ENCODE measurements at regions of chr7 and their contacts with region 1.

Region 1: GRCh38 chr7:67302113-67303039 is 305.7 kb downstream of the TYW1 start:
- DNase-seq: peak; percentile 97
- H3K4me3 Mint-ChIP-seq: peak overlapping the region; percentile 88
- H3K27ac Mint-ChIP-seq: peak overlapping the region; percentile 91
- H3K4me1 Mint-ChIP-seq: peaks cover 21% of the 10 kb centered on the region
- H3K27me3 Mint-ChIP-seq: peaks cover 4% of the 10 kb centered on the region

Region 2: DNA sequence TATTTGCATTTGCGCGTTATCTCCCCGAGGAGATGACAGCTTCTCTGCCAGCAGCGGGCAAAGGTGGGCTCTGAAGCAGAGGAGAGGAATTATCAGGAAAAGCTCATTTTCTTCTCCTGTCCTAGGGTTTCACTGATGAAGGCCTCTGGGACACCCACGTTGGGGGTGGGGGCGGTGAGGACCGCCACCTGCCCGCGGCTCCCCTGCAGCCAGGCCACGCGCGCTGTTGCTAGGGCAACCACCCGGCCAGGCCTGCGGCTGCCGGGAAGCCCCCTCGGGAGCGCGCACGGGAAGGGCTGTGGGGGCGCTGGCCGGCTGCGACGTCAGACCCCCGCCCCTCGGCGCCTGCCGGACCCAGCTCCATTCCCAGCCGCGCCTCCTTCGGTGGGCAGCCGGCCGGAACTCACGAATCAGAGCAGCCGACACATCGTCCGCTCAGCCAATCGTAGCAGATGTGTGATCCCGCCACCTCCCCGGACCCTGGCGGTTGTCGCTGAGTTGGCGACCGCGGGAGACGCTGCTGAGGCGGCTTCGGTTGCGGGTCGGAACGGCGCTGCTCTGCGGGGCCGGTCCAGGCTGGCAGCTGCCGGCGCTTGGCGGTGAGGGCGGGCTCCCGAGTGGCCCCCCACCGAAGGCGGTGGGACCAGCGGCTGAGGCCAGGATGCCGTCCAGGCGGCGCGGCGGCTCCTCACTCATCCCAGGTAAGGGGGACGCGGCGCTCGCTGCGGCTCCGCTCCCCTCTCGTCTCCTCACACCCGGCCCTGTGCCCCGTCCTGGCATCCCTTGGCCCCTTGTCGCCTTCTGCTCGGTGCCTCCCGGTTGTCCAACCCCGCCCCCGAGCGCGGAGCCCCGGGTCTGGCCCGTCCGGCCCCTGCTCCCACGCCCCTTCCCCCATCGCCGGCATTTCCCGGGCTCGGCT is 1097.3 kb before region 1 on chr7 and contains the start of gene TPST1:
- intact Hi-C with region 1: loop called (anchors 10 kb)
- DNase-seq: peak; percentile 77
- H3K4me3 Mint-ChIP-seq: peak within 1 kb of the TSS; percentile 92
- H3K27ac Mint-ChIP-seq: peak within 1 kb of the TSS; percentile 49
- H3K4me1 Mint-ChIP-seq: peaks cover 29% of the 10 kb centered on the region
- H3K27me3 Mint-ChIP-seq: peaks cover 36% of the 10 kb centered on the region
- total RNA-seq, gene TPST1: 1.6 and 1.8 TPM in 2 replicates

Region 3: DNA sequence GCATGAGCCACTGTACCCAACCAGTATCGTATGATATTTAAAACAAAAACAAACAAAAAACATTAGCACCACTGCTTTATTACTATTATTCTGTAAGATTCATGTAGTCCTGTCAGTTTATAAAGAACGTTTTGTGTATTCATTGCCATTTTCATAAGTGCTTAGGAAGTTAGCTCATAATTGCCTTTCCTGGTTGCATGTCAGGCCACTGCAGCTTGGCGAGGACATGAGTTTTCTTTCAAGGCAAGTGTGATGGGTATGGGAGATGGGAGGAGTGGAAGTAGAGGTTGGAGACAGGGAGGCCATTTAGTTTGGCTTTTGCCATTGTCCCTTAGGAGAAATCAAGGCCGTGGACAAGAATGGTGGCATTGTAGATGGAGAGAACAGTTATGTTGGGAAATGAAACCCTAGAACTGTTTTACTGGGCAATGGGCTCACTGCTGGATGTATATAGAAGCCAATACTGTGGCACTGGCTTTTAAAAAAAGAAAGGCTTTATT is 256.8 kb before region 1 on chr7:
- intact Hi-C with region 1: loop called (anchors 2 kb)
- DNase-seq: no peak
- H3K4me3 Mint-ChIP-seq: no peak overlapping the region
- H3K27ac Mint-ChIP-seq: no peak overlapping the region
- H3K4me1 Mint-ChIP-seq: no peaks in the 10 kb centered on the region
- H3K27me3 Mint-ChIP-seq: no peaks in the 10 kb centered on the region

Region 4: DNA sequence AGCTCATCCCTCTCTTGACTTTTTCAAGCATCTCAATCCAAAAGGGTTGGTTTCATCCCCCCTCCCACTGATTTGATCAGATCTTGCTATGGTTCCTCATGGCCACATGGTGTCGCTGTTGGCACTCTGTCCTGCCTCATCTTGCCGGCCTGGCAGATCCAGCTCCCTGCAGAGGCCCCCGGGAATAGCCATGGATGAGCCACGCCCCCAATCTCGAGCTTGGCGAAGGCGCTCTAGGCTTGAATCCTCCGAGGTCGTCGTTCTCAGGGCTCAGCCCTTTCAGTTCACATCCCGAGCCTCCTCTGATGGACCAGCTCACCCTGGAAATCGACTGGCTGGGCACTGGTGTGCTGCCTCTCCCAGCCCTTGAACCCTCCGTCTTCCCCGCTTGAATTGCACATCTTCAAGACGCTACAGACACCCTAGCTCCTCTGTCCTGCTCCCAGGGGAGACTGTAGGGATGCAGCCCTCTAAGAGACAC is 322.9 kb after region 1 on chr7:
- intact Hi-C with region 1: no loop called
- DNase-seq: peak; percentile 4
- H3K4me3 Mint-ChIP-seq: no peak overlapping the region
- H3K27ac Mint-ChIP-seq: no peak overlapping the region
- H3K4me1 Mint-ChIP-seq: no peaks in the 10 kb centered on the region
- H3K27me3 Mint-ChIP-seq: no peaks in the 10 kb centered on the region

Measured in activated T-helper 1 cell treated with anti-CD3 and anti-CD28 coated beads, Interleukin-12 subunit alpha, Interleukin-12 subunit beta, Interleukin-2, Interleukin-4 antibody, amounts not matched to agents 30 ng/mL and 10 ng/mL and 1 ng/mL, durations not matched to agents 14 hours and 24 hours and 36 hours (primary cell).